Right cardiac atrium (tissue), 5 donors: ENCODE measurements at regions of chr1 and their contacts with region 1.

Region 1: GRCh38 chr1:204941421-204942338 is 71.0 kb downstream of the NFASC start:
- DNase-seq: peak; percentile 57 to 83 (median 78)
- ATAC-seq: peak; percentile 69 to 71
- H3K4me3 ChIP-seq: no peak overlapping the region
- H3K27ac ChIP-seq: no peak overlapping the region
- H3K4me1 ChIP-seq: peaks cover 2% of the 10 kb centered on the region
- H3K27me3 ChIP-seq: no peaks in the 10 kb centered on the region

Region 2: DNA sequence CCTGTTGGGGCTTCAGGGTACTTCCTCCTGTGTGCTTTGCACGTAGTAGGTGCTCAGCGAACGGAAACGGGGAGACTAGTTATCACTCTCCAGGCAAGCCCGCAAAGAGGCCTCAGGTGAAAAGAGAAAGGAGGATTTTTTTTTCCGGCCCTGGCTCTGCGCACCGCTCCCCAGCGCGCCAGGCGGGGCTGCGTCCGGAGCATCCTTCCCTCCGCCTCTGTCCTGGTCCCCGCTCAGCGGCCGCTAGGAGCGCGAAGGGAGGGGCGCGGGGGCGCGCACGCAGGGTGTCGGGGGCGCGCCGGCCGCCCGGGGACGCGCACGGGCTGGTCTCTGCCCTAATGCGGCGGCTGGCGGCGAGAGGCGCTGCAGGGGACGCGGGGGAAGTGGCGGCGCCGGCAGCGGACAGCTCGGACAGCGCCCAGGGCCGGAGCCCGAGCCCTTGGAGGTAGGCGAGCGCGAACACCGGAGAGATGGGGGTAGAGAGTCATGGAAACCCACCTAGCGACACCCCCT is 113.3 kb before region 1 on chr1:
- intact Hi-C with region 1: loop called in 2 of 4 experiments (anchors 5 kb)
- DNase-seq: peak; percentile 75 to 93 (median 92)
- ATAC-seq: peak; percentile 93 to 94
- H3K4me3 ChIP-seq: peak overlapping the region; percentile 74
- H3K27ac ChIP-seq: peak overlapping the region; percentile 70
- H3K4me1 ChIP-seq: peaks cover 5% of the 10 kb centered on the region
- H3K27me3 ChIP-seq: no peaks in the 10 kb centered on the region

Region 3: DNA sequence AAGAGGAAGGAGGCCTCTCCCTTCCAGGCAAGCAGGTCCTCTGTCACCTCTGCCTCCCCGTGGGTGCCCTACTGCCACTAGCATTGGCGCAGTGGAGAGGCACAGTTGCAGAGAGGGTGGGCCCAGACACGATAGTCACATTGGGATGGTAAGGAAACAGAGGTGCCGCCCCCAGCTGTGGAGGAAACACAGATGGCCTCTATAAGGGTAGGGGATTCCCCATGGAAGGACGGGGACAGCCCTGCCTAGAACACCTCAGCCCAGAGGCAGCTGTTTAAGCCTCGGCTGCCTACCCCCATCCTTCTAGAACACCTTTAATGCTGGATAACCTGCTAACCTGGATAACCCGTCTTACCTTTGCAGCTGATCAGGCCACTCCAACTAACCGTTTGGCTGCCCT is 35.6 kb after region 1 on chr1:
- intact Hi-C with region 1: no loop called
- DNase-seq: no peak
- ATAC-seq: no peak
- H3K4me3 ChIP-seq: no peak overlapping the region
- H3K27ac ChIP-seq: no peak overlapping the region
- H3K4me1 ChIP-seq: no peaks in the 10 kb centered on the region
- H3K27me3 ChIP-seq: no peaks in the 10 kb centered on the region